ENCODE measurements at regions of chr7 and their contacts with region 1.

Region 1: GRCh38 chr7:44247868-44248651 is 47.3 kb downstream of the YKT6 start:
- DNase-seq: no peak
- H3K4me3 ChIP-seq: no peak overlapping the region
- H3K27ac ChIP-seq: no peak overlapping the region
- H3K4me1 ChIP-seq: no peaks in the 10 kb centered on the region
- H3K27me3 ChIP-seq: no peaks in the 10 kb centered on the region

Region 2: DNA sequence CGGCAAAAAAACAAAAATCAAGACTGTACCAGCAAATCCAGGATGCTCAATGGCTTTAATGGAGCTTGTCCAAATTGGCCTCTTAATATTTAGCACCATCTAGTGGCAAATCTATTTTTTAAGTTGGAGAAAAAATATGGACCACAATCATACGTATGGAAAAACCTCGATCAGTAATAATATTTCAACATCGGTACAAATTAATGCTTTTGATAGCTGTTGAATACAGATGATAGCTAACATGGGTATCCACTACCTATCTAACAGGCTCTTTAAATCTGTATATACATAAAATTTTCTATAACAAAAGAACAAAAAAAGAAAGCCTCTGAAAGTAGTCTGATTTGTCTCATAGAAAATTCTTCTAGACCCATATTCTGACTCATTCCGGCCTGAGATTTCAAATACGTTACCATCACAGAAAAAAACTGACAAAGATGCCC is 548.0 kb before region 1 on chr7:
- in situ Hi-C with region 1: no loop called
- DNase-seq: peak; percentile 88
- H3K4me3 ChIP-seq: peak overlapping the region; percentile 54
- H3K27ac ChIP-seq: peak overlapping the region; percentile 34
- H3K4me1 ChIP-seq: peaks cover 55% of the 10 kb centered on the region
- H3K27me3 ChIP-seq: no peaks in the 10 kb centered on the region

Region 3: GRCh38 chr7:44145479-44145968 is 102.5 kb before region 1 on chr7:
- in situ Hi-C with region 1: no loop called
- DNase-seq: no peak
- H3K4me3 ChIP-seq: peak overlapping the region; percentile 61
- H3K27ac ChIP-seq: no peak overlapping the region
- H3K4me1 ChIP-seq: no peaks in the 10 kb centered on the region
- H3K27me3 ChIP-seq: no peaks in the 10 kb centered on the region

Region 4: GRCh38 chr7:44477063-44477830 is 229.2 kb after region 1 on chr7:
- in situ Hi-C with region 1: loop called (anchors 5 kb)
- DNase-seq: peak; percentile 94
- H3K4me3 ChIP-seq: no peak overlapping the region
- H3K27ac ChIP-seq: peak overlapping the region; percentile 33; the same call in 1 of the 2 replicates
- H3K4me1 ChIP-seq: peaks cover 18% of the 10 kb centered on the region
- H3K27me3 ChIP-seq: no peaks in the 10 kb centered on the region

Measured in GM23248 (cell line).